Left colon (tissue), 2 donors: ENCODE measurements at regions of chr18 and their contacts with region 1.

Region 1: GRCh38 chr18:27605107-27605834 is 420.2 kb upstream of the CHST9 start:
- DNase-seq: peak; percentile 17 to 23
- ATAC-seq: peak; percentile 72

Region 2: GRCh38 chr18:27017901-27018500 is 587.3 kb before region 1 on chr18:
- intact Hi-C with region 1: loop called (anchors 5 to 10 kb)
- DNase-seq: no peak
- ATAC-seq: no peak

Region 3: GRCh38 chr18:27540111-27540510 is 65.2 kb before region 1 on chr18:
- intact Hi-C with region 1: no loop called
- DNase-seq: no peak
- ATAC-seq: no peak

Region 4: GRCh38 chr18:28189400-28190239 is 584.3 kb after region 1 on chr18:
- intact Hi-C with region 1: loop called in 1 of 2 experiments (anchors 10 kb)
- DNase-seq: peak in 1 of 2 donors; percentile 22
- ATAC-seq: no peak